Mammary epithelial cell (primary cell): ENCODE measurements at regions of chr4 and their contacts with region 1.

Region 1: DNA sequence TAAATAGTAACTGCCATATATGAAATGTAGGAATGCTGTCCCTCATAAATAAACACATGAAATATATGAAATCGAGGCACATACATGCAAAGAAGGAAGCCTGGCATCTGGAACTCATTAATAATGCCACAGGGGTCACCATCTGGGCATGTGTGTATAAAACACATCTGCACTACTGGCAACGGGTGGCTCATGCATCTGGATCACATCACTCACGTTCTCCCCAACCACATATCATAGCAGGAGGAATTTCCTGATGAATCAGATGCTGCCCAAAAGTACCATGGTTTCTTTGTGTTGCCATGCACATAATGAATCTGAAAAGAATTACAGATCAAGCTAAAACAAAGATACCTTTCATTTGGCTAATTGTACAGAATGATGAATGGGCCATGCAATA is 28.6 kb downstream of the RNF175 start:
- DNase-seq: peak; percentile 92
- H3K4me3 ChIP-seq: no peak overlapping the region
- H3K27ac ChIP-seq: peak overlapping the region; percentile 99
- H3K4me1 ChIP-seq: peaks cover 13% of the 10 kb centered on the region
- H3K27me3 ChIP-seq: no peaks in the 10 kb centered on the region
- CTCF ChIP-seq: no peak

Region 2: GRCh38 chr4:153676998-153677397 is 54.2 kb before region 1 on chr4:
- CTCF ChIA-PET with region 1: no interaction called
- dilution Hi-C with region 1: loop called (anchors 5 kb)
- in situ Hi-C with region 1: no loop called
- intact Hi-C with region 1: no loop called
- DNase-seq: peak; percentile 97
- H3K4me3 ChIP-seq: no peak overlapping the region
- H3K27ac ChIP-seq: peak overlapping the region; percentile 83
- H3K4me1 ChIP-seq: peaks cover 22% of the 10 kb centered on the region
- H3K27me3 ChIP-seq: no peaks in the 10 kb centered on the region
- CTCF ChIP-seq: no peak